ENCODE measurements at regions of chr22 and their contacts with region 1.

Region 1: DNA sequence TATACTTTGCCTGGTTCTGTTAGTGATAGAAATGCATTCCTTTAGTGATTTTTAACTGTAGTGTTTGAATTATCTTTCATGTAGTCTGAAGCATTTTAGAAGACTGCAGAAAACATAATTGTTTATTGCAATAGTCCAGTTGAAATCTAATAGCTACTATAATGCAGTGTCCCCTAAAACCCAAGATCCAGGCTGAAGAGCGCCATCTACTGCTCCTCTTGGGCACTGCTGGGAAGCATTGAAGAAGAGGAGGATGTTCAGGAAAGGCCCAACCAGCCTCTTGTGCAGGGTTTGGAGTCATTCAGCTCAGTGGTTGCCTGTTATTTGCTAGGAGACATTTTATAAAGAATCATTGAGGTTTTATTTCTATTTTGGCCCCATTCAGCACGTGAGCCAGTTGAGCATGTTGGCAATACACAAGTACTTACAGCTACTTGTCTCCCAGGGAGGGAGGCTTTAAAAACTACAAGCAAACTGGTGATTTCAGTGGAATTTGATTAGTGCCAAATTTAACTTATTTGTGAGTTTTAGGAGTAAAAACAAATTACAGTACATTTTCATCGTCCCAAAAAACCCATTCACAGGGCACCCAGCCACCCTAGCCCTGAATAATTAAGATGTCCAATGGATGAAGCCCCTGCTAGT is 74.9 kb upstream of the HORMAD2 start:
- DNase-seq: peak; percentile 66 to 69
- ATAC-seq: peak; percentile 79 to 93 (median 91)
- H3K4me3 ChIP-seq: no peak overlapping the region
- H3K27ac ChIP-seq: peak overlapping the region in 3 of 10 donors; percentile 5 to 27 (median 23)
- H3K4me1 ChIP-seq: peaks cover 3 to 16% (median 12%) of the 10 kb centered on the region in 9 donors
- H3K27me3 ChIP-seq: no peaks in the 10 kb centered on the region
- CTCF ChIP-seq: peak; percentile 80 to 98 (median 96)

Region 2: DNA sequence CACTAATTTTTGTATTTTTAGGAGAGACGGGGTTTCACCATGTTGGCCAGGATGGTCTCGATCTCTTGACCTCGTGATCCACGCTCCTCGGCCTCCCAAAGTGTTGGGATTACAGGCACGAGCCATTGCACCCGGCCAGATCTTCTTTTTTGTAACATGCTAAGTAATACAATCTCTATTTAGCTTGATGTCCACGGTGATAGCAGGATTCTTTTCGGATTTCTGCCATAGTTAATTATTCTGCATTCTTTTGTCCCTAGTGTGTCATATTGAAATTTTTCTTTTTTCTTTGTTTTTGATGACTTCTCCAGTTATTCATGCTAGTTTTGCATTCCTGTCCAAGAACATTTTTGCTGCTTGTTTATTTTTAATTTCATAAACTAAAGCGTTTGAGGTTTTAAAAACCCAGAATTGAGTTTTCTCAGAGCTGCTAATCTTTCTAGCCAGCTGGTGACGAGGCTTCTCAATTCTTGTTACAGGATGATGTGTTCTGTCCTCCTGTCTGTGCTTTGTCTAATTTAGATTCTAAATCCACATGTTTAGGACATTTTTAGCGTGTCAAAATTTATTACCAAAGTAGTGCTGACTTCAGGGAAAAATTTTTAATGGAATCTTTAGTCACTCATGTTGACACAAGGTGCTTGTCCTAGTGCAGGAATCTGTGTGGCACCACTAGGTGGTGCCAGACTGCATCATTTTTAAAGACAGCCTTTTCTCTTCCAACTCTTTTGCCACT is 380.1 kb before region 1 on chr22:
- intact Hi-C with region 1: loop called in 2 of 10 experiments (anchors 5 to 10 kb)
- DNase-seq: no peak
- ATAC-seq: peak in 4 of 8 donors; percentile 61 to 71 (median 64)
- H3K4me3 ChIP-seq: no peak overlapping the region
- H3K27ac ChIP-seq: no peak overlapping the region
- H3K4me1 ChIP-seq: peaks cover 0 to 60% (median 36%) of the 10 kb centered on the region in 9 donors
- H3K27me3 ChIP-seq: no peaks in the 10 kb centered on the region
- CTCF ChIP-seq: peak; percentile 65 to 91 (median 83)

Region 3: DNA sequence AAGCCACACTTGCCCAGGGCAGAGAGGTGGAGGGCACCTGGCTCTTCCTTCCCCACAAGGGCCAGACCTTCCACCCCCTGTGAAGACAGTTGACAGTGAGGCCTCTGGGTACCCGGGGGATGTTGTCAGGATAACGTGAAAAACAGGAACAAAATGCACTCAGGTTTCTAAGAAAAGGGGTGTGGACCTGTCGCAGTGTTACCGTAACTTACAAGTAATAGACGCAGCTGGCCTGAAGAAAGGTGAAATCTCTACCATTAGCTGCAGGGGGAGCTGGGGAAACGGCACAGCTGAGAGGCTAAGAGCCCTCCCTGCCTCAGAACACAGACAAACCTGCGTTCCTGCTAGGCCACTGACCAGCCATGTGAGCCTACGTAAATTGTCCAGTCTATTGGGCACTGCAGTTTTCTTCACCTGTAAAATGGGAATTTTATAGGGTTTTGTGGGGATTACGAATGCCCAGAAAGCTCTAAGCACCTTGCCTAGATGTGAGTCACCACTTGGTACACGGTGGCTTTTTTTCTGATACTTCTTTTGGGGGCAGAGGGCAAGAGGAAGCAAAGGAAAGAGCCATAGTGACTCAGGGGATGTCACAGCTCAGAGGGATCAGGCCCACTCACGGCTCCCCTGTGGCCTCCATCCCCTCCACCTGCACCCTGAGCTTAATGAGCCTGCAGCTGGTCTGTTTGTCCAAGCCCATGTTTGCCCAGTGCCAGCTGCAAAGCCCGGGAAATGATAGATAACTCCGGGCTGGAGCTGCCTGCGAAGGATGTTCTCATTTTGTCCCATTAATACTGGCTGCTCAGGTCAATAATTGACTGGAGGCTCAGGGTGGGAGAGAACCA is 304.0 kb before region 1 on chr22:
- intact Hi-C with region 1: loop called in 3 of 10 experiments (anchors 5 to 10 kb)
- DNase-seq: no peak
- ATAC-seq: no peak
- H3K4me3 ChIP-seq: no peak overlapping the region
- H3K27ac ChIP-seq: no peak overlapping the region
- H3K4me1 ChIP-seq: peaks cover 0 to 30% (median 11%) of the 10 kb centered on the region in 9 donors
- H3K27me3 ChIP-seq: peaks cover 0 to 42% (median 28%) of the 10 kb centered on the region in 7 donors
- CTCF ChIP-seq: peak in 1 of 9 donors; percentile 11

Region 4: GRCh38 chr22:29766632-29767170 is 238.6 kb before region 1 on chr22 and contains the start of gene ZMAT5:
- intact Hi-C with region 1: loop called in 6 of 10 experiments (anchors 5 to 10 kb)
- DNase-seq: peak; percentile 91 to 95
- ATAC-seq: peak; percentile 96 to 99 (median 99)
- H3K4me3 ChIP-seq: peak within 1 kb of the TSS; percentile 54 to 97 (median 86)
- H3K27ac ChIP-seq: peak within 1 kb of the TSS; percentile 89 to 97 (median 94)
- H3K4me1 ChIP-seq: peaks cover 6 to 45% (median 31%) of the 10 kb centered on the region in 9 donors
- H3K27me3 ChIP-seq: no peaks in the 10 kb centered on the region
- CTCF ChIP-seq: no peak
- total RNA-seq, gene ZMAT5: 15.1 to 23.9 (median 19.3) TPM

Region 5: DNA sequence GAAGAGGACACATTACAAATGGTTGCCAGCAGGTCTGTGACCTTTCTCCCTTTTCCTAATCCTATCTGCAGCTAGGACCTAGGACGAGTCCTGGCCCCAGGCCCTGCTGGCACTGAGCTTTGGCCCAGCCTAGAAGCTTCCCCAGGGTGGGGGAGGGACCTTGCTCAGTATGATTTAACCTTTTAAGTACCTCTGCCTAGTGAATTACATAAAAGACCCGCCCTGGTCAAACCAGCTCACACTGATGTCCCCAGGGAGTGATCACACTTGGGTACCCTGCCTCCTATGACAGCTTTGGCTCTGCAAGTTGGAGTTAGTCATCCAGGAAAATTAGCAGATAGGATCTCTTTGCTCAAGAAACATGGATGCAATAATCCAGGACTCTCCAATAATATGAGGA is 189.2 kb before region 1 on chr22:
- intact Hi-C with region 1: loop called in 2 of 10 experiments (anchors 5 to 10 kb)
- DNase-seq: peak; percentile 55 to 80
- ATAC-seq: peak; percentile 57 to 88 (median 74)
- H3K4me3 ChIP-seq: no peak overlapping the region
- H3K27ac ChIP-seq: peak overlapping the region in 7 of 10 donors; percentile 28 to 70 (median 62)
- H3K4me1 ChIP-seq: peaks cover 9 to 44% (median 26%) of the 10 kb centered on the region in 9 donors
- H3K27me3 ChIP-seq: no peaks in the 10 kb centered on the region
- CTCF ChIP-seq: no peak

Region 6: GRCh38 chr22:29855611-29856181 is 149.6 kb before region 1 on chr22:
- intact Hi-C with region 1: loop called in 1 of 10 experiments (anchors 10 kb)
- DNase-seq: peak; percentile 69 to 79
- ATAC-seq: peak; percentile 83 to 97 (median 96)
- H3K4me3 ChIP-seq: no peak overlapping the region
- H3K27ac ChIP-seq: peak overlapping the region; percentile 30 to 92 (median 70)
- H3K4me1 ChIP-seq: peaks cover 0 to 28% (median 5%) of the 10 kb centered on the region in 9 donors
- H3K27me3 ChIP-seq: no peaks in the 10 kb centered on the region
- CTCF ChIP-seq: peak in 6 of 9 donors; percentile 13 to 59 (median 40)